ENCODE measurements at regions of chr16 and their contacts with region 1.

Region 1: GRCh38 chr16:78002915-78003538 is 19.3 kb upstream of the CLEC3A start:
- DNase-seq: peak; percentile 32 to 94
- H3K4me3 ChIP-seq: no peak overlapping the region
- H3K27ac ChIP-seq: no peak overlapping the region
- H3K4me1 ChIP-seq: no peaks in the 10 kb centered on the region
- H3K27me3 ChIP-seq: no peaks in the 10 kb centered on the region
- CTCF ChIP-seq: peak; percentile 87 to 90 (median 88)

Region 2: DNA sequence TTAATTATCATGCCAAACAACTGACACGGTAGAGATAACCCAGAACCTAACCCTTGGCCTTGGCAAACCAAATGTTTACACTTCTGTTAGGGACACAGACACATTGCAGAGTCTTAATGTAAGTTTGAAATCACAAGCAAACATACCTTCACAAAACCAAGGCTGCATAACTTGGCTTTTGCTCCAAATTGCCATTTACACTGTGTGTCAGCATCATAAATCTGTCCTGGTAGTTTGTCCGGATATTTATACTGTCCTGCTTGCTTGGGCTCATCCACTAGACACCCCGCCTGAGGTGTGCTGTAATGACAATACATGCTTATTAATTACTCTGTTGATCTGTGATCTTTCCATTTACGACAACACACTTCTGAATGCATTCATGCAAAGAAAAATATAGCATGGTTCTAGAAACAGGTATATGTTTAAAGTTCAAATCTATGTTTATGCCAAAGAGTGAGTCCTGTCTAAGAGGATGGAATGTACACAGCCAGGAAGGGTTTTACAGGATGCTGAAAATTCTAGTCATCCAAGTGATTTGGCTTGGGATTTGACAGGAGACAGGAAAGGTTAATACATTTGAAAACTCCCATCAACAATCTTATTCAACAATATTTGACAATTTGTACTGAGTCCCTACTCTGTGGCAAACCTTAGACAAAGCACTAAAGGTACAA is 649.3 kb before region 1 on chr16:
- intact Hi-C with region 1: no loop called
- DNase-seq: no peak
- H3K4me3 ChIP-seq: no peak overlapping the region
- H3K27ac ChIP-seq: no peak overlapping the region
- H3K4me1 ChIP-seq: no peaks in the 10 kb centered on the region
- H3K27me3 ChIP-seq: no peaks in the 10 kb centered on the region
- CTCF ChIP-seq: no peak

Region 3: GRCh38 chr16:77971306-77972271 is 31.4 kb before region 1 on chr16:
- intact Hi-C with region 1: loop called (anchors 1 kb)
- DNase-seq: peak in 1 of 2 donors; percentile 91
- H3K4me3 ChIP-seq: no peak overlapping the region
- H3K27ac ChIP-seq: peak overlapping the region; percentile 50 to 59
- H3K4me1 ChIP-seq: peaks cover 0 to 5% of the 10 kb centered on the region in 2 donors
- H3K27me3 ChIP-seq: no peaks in the 10 kb centered on the region
- CTCF ChIP-seq: peak; percentile 68 to 89 (median 84)

Region 4: GRCh38 chr16:77987810-77988209 is 15.2 kb before region 1 on chr16:
- intact Hi-C with region 1: loop called (anchors 2 kb)
- DNase-seq: no peak
- H3K4me3 ChIP-seq: peak overlapping the region in 1 of 2 donors; percentile 2
- H3K27ac ChIP-seq: peak overlapping the region; percentile 73 to 82
- H3K4me1 ChIP-seq: peaks cover 0 to 13% of the 10 kb centered on the region in 2 donors
- H3K27me3 ChIP-seq: no peaks in the 10 kb centered on the region
- CTCF ChIP-seq: no peak

Region 5: DNA sequence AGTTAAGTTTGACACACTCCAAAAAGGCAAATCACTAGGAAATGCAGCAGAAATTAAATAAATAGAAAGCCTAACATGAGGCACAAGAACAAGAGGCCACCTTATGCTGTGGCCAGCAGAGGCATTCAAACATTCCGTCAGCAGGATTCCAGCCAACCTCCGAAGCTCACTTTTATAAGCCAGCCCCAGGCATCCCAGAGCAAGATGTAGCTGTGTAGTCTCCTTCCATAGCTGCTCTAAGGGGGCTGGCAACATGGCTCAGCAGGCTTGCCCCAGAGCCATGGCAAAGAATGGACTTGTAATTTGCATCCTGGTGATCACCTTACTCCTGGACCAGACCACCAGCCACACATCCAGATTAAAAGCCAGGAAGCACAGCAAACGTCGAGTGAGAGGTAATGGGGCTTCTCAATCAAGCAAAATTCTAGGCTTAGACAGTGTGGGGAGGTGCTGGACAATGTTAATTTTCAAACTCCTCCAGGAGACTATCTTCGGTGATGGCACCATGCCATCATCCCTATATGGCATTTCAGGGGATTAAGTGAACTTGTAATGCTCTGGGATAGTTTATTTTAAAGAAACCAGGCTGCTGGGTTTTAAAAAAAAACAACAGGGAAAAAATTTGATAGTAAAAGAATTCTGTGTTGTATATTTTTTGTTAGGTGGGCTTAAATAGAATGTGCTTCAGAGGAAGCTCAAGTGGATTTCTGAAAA is 19.5 kb after region 1 on chr16 and contains the start of gene CLEC3A:
- intact Hi-C with region 1: no loop called
- DNase-seq: no peak
- H3K4me3 ChIP-seq: no peak within 1 kb of the TSS
- H3K27ac ChIP-seq: no peak within 1 kb of the TSS
- H3K4me1 ChIP-seq: no peaks in the 10 kb centered on the region
- H3K27me3 ChIP-seq: no peaks in the 10 kb centered on the region
- CTCF ChIP-seq: no peak
- total RNA-seq, gene CLEC3A: not detected

Region 6: GRCh38 chr16:78106686-78107085 is 103.7 kb after region 1 on chr16:
- intact Hi-C with region 1: no loop called
- DNase-seq: no peak
- H3K4me3 ChIP-seq: no peak overlapping the region
- H3K27ac ChIP-seq: no peak overlapping the region
- H3K4me1 ChIP-seq: peaks cover 0 to 18% of the 10 kb centered on the region in 2 donors
- H3K27me3 ChIP-seq: no peaks in the 10 kb centered on the region
- CTCF ChIP-seq: no peak